CD4-positive, alpha-beta memory T cell (primary cell): ENCODE measurements at regions of chr3 and their contacts with region 1.

Region 1: DNA sequence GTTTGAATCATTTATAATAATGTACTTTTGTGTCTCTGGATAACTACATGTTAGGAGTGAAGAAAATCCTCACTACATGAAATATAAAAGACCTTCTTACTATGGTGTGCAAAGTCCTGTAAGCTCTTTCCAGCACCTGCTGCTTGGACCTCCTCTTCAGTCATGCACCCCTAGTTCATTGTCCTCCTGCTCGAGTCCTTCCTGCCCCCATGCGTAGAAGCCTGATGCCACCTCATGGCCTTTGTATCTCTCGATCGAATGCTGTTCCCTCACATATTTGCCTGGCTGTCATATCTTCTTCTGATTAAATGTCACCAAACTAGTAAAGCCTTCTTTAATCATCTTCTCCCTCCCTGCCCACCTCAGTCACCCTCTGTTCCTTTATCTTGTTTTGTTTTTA is 49.9 kb upstream of the SUCLG2 start:
- DNase-seq: no peak
- H3K4me3 ChIP-seq: no peak overlapping the region
- H3K4me3 Mint-ChIP-seq: no peak overlapping the region
- H3K27ac ChIP-seq: no peak overlapping the region
- H3K27ac Mint-ChIP-seq: peak overlapping the region in 2 of 7 donors; percentile 58 to 59
- H3K4me1 ChIP-seq: no peaks in the 10 kb centered on the region
- H3K4me1 Mint-ChIP-seq: no peaks in the 10 kb centered on the region
- H3K27me3 ChIP-seq: no peaks in the 10 kb centered on the region
- H3K27me3 Mint-ChIP-seq: no peaks in the 10 kb centered on the region

Region 2: DNA sequence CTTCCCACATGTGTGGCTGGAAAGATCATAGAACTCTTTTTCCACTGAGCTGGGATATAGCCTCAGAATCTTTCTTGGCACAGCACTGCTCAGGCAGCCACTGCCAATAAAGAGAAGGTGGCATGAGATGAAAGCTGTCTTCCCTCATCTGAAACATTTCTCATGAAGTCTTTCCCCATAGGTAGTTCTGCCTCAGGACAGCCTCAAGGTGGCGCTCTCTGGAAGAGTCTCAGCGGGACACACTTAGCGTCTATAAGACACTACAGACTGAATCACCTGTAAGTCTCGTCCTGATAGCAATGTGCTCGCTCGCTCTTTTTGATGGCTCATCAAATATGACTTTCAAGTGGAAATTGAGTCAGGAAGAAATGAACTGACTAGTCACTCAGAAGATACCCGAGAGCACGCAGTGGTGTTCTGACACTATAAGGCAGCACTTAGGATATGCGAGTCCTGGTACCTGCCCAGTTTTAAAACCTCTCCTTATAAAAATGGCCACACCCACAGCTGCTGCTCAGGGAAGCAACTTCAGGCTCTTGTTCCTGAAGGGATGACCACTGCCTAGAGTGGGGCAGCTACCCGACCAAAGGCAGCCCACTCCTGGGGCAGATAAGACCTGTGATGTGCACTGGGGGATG is 319.4 kb before region 1 on chr3:
- CTCF ChIA-PET with region 1: interaction called, 10 read pairs
- POLR2A ChIA-PET with region 1: no interaction called
- intact Hi-C with region 1: no loop called
- DNase-seq: peak in 4 of 5 donors; percentile 24 to 38 (median 30)
- H3K4me3 ChIP-seq: no peak overlapping the region
- H3K4me3 Mint-ChIP-seq: no peak overlapping the region
- H3K27ac ChIP-seq: no peak overlapping the region
- H3K27ac Mint-ChIP-seq: peak overlapping the region in 1 of 7 donors; percentile 52
- H3K4me1 ChIP-seq: no peaks in the 10 kb centered on the region
- H3K4me1 Mint-ChIP-seq: peaks cover 0 to 10% (median 5%) of the 10 kb centered on the region in 4 donors
- H3K27me3 ChIP-seq: no peaks in the 10 kb centered on the region
- H3K27me3 Mint-ChIP-seq: no peaks in the 10 kb centered on the region